A549 (cell line): ENCODE measurements at regions of chr19 and their contacts with region 1.

Region 1: GRCh38 chr19:42325896-42326771 is 699 bp downstream of the MEGF8 start:
- DNase-seq: peak in 1 of 2 experiments; percentile 59
- ATAC-seq: peak; percentile 46 to 64
- H3K4me3 ChIP-seq: peak overlapping the region; percentile 75
- H3K27ac ChIP-seq: peak overlapping the region; percentile 85 to 90
- H3K4me1 ChIP-seq: peaks cover 19% of the 10 kb centered on the region; the same call in 2 of the 3 replicates
- CTCF ChIP-seq: peak; percentile 43
- EP300 ChIP-seq: no peak
- POLR2A ChIP-seq: peak; percentile 7; the same call in 1 of the 2 replicates
- RAD21 ChIP-seq: no peak

Region 2: DNA sequence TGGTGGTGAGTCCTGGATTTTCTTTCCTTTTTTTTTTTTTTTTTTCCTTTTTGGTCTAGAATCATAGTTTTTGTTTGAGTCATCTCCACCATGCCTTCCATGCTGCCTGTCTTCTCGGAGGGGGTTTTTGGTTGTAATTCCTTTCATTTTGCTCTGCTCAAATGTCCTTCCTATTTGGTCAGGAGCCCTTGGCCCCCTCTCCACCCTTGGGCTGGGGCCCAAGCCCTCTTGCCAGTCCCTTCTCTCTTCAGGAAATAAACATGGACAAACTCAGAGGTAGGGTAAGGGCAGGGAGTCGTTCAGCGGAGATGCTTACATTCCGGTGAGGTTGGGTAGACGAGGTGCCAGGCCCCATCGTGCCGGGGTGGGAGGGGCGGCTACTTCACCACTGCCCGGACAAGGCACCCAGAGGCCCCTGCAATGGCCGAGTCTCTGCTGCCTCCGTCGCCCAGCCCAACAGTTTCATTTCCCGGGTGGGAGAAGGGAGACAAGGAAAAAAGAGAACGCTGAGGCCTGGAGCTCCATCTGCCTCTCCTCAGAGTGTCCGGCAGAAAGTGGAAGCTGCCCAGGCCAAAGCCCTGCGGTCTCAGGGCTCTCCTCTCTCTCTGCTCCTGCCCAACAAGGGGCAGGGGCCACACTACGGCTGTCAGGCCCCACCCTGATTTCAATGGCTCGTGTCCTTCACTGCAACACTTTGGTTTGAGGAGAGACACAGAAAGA is 237.5 kb before region 1 on chr19:
- CTCF ChIA-PET with region 1: no interaction called
- POLR2A ChIA-PET with region 1: no interaction called
- DNase-seq: no peak
- ATAC-seq: peak in 1 of 2 experiments; percentile 15; a peak in 1 of 6 replicates
- H3K4me3 ChIP-seq: no peak overlapping the region
- H3K27ac ChIP-seq: peak overlapping the region in 1 of 2 experiments; percentile 51; a peak in 3 of 6 replicates
- H3K4me1 ChIP-seq: peaks cover 24% of the 10 kb centered on the region
- CTCF ChIP-seq: no peak
- EP300 ChIP-seq: no peak
- POLR2A ChIP-seq: no peak
- RAD21 ChIP-seq: no peak

Region 3: DNA sequence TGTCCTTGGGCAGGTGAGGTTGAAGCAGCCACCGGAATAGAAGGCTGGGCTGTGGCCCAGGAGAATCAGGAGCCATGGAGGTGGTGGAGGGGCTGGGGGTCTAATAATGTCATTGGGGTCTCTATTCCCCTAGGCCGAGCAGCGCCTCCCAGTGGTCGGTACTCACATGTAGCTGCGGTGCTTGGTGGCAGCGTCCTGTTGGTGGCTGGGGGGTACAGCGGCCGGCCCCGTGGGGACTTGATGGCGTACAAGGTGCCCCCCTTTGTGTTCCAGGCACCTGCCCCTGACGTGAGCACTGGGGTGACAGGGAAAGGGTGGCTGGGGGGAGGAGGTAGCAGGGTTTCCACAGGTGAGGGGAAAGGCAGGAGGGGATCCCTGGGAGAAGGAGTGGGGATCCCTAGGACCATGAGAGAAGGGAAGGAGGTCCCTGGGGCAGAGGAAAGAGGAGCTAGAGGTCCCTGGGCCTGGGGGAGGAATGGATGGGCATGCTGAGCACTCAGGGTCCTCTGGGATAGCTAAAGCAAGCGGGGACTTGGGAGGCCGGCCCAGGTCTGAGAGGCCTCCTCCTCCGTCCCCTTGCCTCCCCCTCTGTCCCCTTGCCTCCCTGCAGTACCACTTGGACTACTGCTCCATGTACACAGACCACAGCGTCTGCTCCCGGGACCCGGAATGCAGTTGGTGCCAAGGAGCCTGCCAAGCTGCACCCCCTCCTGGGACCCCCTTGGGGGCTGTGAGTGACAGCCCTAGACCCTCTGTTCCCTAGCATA is 17.4 kb after region 1 on chr19:
- CTCF ChIA-PET with region 1: interaction called, 27 read pairs
- POLR2A ChIA-PET with region 1: no interaction called
- DNase-seq: no peak
- ATAC-seq: peak; percentile 57 to 69
- H3K4me3 ChIP-seq: no peak overlapping the region
- H3K27ac ChIP-seq: no peak overlapping the region
- H3K4me1 ChIP-seq: peaks cover 6% of the 10 kb centered on the region; the same call in 2 of the 3 replicates
- CTCF ChIP-seq: peak; percentile 27; the same call in 1 of the 3 replicates
- EP300 ChIP-seq: no peak
- POLR2A ChIP-seq: no peak
- RAD21 ChIP-seq: no peak

Region 4: DNA sequence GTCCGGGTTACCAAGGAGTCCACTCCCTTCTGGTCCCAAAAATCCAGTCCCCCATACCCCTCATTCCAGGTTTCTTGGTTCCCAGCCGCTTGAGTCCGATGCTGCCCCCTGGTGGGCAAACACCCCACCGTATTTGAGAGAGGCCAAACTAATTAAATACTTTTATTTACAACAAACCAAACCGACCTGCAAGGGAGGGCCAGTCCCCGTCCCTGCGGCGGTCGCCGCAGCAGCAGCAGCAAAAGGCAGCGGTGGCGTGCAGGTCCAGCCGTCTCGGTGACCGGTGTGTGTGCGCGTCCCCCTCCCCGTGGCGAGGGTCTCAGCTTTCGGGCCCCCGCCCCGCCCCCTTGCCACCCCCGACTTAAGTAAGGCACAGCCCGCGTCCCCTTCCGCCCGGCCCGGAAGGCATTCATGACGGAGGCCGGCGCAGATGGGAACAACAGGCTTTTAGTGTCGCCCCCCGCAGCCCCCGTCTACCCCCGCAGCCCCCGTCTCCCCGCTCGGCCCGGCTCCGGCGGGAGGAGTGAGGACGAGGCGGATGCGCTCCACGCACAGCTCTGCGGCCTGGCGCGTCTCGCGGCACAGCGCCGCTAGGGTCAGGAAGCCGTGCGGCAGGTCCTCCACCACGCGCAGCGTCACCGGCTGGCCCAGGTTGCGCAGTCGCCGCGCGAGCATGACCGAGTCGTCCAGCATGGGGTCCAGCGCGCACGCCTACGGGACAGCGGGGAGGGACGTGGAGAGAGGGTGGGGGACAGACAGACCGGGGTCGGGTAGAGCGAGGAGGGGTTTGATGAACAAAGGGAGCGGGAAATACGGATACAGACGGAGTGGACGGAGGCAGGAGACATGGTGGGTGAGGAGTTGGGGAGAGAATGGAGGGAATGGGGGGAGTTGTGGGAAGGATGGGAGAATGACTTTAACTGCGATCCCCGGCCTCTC is 75.5 kb after region 1 on chr19:
- CTCF ChIA-PET with region 1: interaction called, 20 read pairs
- POLR2A ChIA-PET with region 1: interaction called, 3 read pairs
- DNase-seq: peak; percentile 89 to 96
- ATAC-seq: peak; percentile 63 to 75
- H3K4me3 ChIP-seq: peak overlapping the region; percentile 56
- H3K27ac ChIP-seq: peak overlapping the region; percentile 72 to 84
- H3K4me1 ChIP-seq: peaks cover 19% of the 10 kb centered on the region
- CTCF ChIP-seq: peak; percentile 99
- EP300 ChIP-seq: no peak
- POLR2A ChIP-seq: peak; percentile 91
- RAD21 ChIP-seq: peak in 1 of 2 experiments; percentile 67; a peak in 4 of 5 replicates